A549 (cell line): ENCODE measurements at regions of chr7 and their contacts with region 1.

Region 1: GRCh38 chr7:100469227-100470044 is 5.4 kb upstream of the SPACDR start:
- DNase-seq: peak; percentile 72 to 90
- ATAC-seq: peak; percentile 92 to 93
- H3K4me3 ChIP-seq: no peak overlapping the region
- H3K27ac ChIP-seq: peak overlapping the region in 1 of 2 experiments; percentile 58; a peak in 2 of 6 replicates
- H3K4me1 ChIP-seq: peaks cover 13% of the 10 kb centered on the region
- CTCF ChIP-seq: peak; percentile 83
- EP300 ChIP-seq: no peak
- POLR2A ChIP-seq: no peak
- RAD21 ChIP-seq: peak; percentile 89 to 91

Region 2: GRCh38 chr7:100407285-100408180 is 61.9 kb before region 1 on chr7:
- CTCF ChIA-PET with region 1: no interaction called
- POLR2A ChIA-PET with region 1: no interaction called
- DNase-seq: peak; percentile 72 to 84
- ATAC-seq: peak; percentile 93 to 94
- H3K4me3 ChIP-seq: no peak overlapping the region
- H3K27ac ChIP-seq: no peak overlapping the region
- H3K4me1 ChIP-seq: no peaks in the 10 kb centered on the region
- CTCF ChIP-seq: peak; percentile 72
- EP300 ChIP-seq: no peak
- POLR2A ChIP-seq: no peak
- RAD21 ChIP-seq: peak; percentile 70 to 77

Region 3: GRCh38 chr7:100444311-100445278 is 24.8 kb before region 1 on chr7:
- CTCF ChIA-PET with region 1: interaction called, 56 read pairs
- POLR2A ChIA-PET with region 1: no interaction called
- DNase-seq: peak in 1 of 2 experiments; percentile 43
- ATAC-seq: peak; percentile 36 to 58
- H3K4me3 ChIP-seq: no peak overlapping the region
- H3K27ac ChIP-seq: peak overlapping the region in 1 of 2 experiments; percentile 63; a peak in 3 of 6 replicates
- H3K4me1 ChIP-seq: peaks cover 10% of the 10 kb centered on the region; the same call in 2 of the 3 replicates
- CTCF ChIP-seq: no peak
- EP300 ChIP-seq: no peak
- POLR2A ChIP-seq: no peak
- RAD21 ChIP-seq: no peak

Region 4: GRCh38 chr7:100455206-100455605 is 14.2 kb before region 1 on chr7:
- CTCF ChIA-PET with region 1: interaction called, 56 read pairs
- POLR2A ChIA-PET with region 1: no interaction called
- DNase-seq: no peak
- ATAC-seq: no peak
- H3K4me3 ChIP-seq: no peak overlapping the region
- H3K27ac ChIP-seq: no peak overlapping the region
- H3K4me1 ChIP-seq: 0 out of 3 replicates have a peak, but pooled peaks cover 3% of the 10 kb centered on the region
- CTCF ChIP-seq: no peak
- EP300 ChIP-seq: no peak
- POLR2A ChIP-seq: no peak
- RAD21 ChIP-seq: no peak

Region 5: DNA sequence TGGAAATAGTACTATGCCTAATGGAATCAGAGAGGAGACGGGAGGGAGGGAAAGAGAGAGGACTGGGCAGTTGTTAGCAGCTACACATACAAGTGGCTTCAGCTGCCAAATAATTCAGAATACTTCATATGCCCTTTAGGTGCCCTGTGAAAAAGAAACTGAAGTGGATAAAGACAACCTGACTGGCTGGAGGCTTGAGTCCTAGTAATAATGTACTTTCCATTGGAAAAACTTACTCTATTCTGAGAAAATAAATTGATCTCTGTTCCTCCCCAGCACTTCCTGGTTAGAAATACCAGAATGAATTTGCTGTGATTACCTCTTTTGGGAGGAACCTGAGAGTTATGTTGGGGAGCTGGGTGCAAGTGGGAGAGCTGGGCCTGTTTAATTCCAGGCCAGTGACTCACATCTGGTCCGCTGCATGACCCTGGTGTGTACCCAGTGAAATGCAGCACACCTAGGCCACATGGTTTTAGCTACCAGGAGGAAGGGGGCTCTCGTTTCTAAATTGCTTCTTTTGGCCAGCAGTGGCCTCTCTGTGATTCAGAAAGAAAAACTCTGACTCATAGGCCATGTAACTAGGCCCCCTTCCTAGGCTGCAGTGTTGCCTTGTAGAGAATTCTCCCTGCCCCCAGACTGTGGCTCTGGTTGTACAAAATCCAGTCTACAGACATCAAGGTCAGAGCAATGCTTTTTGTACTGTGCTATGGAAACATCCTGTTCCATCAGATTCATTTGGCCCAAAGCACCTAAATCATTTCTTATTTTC is 76.1 kb after region 1 on chr7:
- CTCF ChIA-PET with region 1: interaction called, 16 read pairs
- POLR2A ChIA-PET with region 1: no interaction called
- DNase-seq: peak; percentile 91 to 93
- ATAC-seq: peak; percentile 93 to 94
- H3K4me3 ChIP-seq: peak overlapping the region; percentile 30; the same call in 1 of the 3 replicates
- H3K27ac ChIP-seq: peak overlapping the region; percentile 94 to 100
- H3K4me1 ChIP-seq: peaks cover 77% of the 10 kb centered on the region
- CTCF ChIP-seq: peak; percentile 15; the same call in 1 of the 3 replicates
- EP300 ChIP-seq: peak in 1 of 2 experiments; percentile 53; a peak in 1 of 5 replicates
- POLR2A ChIP-seq: no peak
- RAD21 ChIP-seq: peak in 1 of 2 experiments; percentile 32; a peak in 2 of 5 replicates

Region 6: DNA sequence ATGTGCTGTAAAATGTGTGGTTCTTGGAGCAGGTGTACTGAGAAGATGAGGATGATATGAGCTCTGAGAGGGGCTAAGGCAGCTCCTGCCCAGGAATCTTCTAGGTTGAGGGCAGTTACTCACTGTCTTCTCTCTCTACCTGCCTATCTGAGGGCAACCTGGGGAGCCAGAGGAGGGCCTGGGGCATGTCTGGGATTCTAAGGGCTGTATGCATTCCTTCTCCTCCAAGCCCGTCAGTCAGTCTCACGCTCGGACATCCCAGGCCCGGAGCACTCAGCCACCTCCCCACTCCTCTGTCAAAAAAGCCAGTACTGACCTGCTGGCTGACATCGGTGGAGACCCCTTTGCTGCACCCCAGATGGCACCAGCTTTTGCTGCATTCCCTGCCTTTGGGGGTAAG is 84.4 kb after region 1 on chr7:
- CTCF ChIA-PET with region 1: interaction called, 273 read pairs
- POLR2A ChIA-PET with region 1: no interaction called
- DNase-seq: no peak
- ATAC-seq: no peak
- H3K4me3 ChIP-seq: no peak overlapping the region
- H3K27ac ChIP-seq: no peak overlapping the region
- H3K4me1 ChIP-seq: peaks cover 6% of the 10 kb centered on the region; the same call in 2 of the 3 replicates
- CTCF ChIP-seq: no peak
- EP300 ChIP-seq: no peak
- POLR2A ChIP-seq: no peak
- RAD21 ChIP-seq: no peak

Region 7: DNA sequence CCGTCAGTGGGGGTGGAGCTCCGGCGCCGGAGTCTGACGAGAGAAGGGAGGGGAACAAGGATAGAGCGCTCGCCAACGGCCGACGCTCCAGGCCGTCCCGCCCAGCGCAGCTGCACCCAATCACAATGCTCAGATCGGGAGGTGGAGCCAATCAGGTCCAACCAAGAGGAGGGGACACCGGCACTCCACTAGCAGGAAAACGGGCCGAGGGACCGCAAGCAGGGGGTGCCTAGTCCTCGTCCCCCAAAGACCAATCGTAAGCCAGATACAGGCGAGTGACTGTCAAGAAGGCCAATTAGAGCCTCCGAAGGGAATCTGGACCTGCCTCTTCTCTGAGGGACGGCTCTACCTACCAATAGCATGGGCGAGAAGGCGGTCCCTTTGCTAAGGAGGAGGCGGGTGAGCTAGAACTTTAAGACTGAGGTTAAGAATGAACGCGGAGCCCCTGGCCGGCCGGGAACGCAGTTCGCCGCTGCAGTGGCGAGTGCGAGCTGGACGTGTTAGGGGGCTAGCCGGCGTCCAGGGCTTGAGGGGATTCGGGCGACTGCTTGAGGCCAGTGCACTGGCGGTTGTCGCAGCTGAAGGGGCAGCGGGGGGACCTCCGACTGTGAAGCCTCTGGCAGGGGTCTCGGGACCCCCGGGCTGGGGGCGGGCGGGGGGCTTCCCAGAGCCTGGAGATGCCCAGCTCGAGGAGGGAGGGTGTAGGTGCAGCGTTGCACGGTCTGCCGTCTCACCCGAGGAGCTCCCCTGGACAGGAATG is 117.0 kb after region 1 on chr7 and contains the start of gene FBXO24:
- CTCF ChIA-PET with region 1: interaction called, 17 read pairs
- POLR2A ChIA-PET with region 1: interaction called, 3 read pairs
- DNase-seq: peak; percentile 100
- ATAC-seq: peak; percentile 88 to 95
- H3K4me3 ChIP-seq: peak within 1 kb of the TSS; percentile 99
- H3K27ac ChIP-seq: peak within 1 kb of the TSS; percentile 95 to 99
- H3K4me1 ChIP-seq: peaks cover 15% of the 10 kb centered on the region
- CTCF ChIP-seq: no peak
- EP300 ChIP-seq: no peak
- POLR2A ChIP-seq: peak; percentile 79
- RAD21 ChIP-seq: no peak
- polyA plus RNA-seq, gene FBXO24: 0.36 and 0.52 TPM in 2 replicates